Left cardiac atrium (tissue), 4 donors: ENCODE measurements at regions of chr5 and their contacts with region 1.

Region 1: DNA sequence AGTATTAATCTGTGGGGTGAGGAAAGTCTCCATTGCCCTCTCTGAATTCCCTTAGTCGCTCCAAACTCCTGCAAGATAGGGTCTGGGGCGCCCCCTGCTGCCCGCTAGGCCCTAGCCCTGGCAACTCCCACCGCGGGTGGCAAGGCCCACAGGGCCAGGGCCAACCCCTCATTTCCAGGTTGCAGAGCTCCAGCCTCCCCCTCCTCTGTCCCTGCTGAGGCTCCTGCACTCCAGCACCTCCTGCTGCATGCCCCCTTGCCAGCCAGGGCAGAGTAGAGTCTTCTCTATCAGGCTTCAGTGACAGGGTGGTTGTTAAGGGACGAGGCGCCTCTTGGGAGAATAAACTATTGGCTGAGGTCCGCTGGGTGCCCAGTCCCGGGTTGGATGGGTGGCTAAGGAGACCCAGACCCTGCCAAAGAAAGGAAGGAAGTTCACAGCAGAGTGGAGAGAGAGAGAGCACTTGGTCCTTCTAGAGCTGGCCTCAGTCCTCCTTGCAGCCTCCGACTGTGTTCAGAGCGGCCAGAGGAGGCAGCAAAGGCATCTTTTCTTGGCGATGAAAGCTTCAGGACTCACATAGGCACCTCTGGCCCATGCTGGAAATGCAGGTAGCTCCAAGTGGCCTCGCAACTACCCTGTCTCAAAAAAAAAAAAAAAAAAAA is 45.6 kb downstream of the SAR1B start:
- DNase-seq: peak; percentile 88
- ATAC-seq: peak; percentile 92

Region 2: GRCh38 chr5:134184155-134185135 is 402.6 kb before region 1 on chr5:
- intact Hi-C with region 1: loop called (anchors 10 kb)
- DNase-seq: peak; percentile 52
- ATAC-seq: peak; percentile 90 to 91

Region 3: DNA sequence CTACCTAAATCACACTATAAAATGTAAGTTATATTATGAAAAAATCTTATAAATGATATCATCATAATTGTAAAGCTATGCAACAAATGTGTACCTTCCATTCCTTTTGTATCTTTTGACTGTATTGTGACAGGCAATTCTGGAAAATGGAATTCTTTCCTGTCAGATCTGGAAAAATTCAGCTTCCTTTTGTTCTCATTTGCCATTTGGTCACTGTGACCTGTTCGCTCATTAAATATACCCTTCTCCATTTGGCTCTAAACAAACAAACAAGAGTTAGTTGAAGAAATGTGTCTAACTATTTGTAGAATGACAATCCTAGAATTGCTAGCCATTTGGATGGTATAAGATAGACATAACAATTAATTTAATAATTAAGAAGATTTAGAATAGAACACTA is 282.7 kb before region 1 on chr5:
- intact Hi-C with region 1: loop called (anchors 2 to 5 kb)
- DNase-seq: no peak
- ATAC-seq: no peak

Region 4: DNA sequence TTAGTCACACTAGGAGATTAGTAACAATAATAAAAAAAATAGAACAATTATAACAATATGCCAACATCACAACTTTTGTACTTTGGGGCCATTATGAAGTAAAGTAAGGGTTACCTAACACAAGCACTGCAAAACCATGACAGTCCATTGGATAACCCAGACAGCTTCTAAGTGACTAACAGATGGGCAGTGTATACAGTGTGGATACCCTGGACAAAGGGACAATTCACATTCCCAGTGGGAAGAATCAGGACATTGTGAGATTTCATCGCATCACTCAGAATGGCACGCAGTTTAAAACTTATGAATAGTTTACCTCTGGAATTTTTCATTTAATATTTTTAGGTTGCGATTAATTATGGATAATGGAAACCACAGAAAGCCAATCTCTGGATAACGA is 107.2 kb before region 1 on chr5:
- intact Hi-C with region 1: no loop called
- DNase-seq: no peak
- ATAC-seq: no peak

Region 5: DNA sequence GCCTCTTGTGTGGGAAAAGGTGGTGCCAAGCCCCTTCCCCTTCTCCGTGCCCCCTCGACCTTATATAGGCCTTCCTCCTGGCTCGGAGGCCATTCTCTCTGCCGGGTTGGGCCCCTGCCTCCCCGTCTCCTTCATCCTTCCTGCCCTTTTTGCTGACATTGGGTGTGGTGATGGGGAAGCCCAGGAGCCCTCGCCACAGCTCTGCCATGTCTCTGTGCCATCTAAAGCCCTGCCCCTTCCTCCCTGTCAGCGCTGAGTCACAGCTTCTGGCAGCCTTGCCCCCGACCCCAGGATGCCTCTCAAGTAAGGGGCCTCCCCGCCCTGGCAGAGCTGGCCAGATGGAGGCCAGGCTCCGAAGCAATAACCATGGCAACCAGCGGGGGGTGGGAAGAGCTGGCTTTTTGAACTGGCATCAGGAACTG is 31.1 kb before region 1 on chr5:
- intact Hi-C with region 1: no loop called
- DNase-seq: peak; percentile 82
- ATAC-seq: peak; percentile 10 to 43